Transverse colon (tissue), 4 donors: ENCODE measurements at regions of chr20 and their contacts with region 1.

Region 1: GRCh38 chr20:40617594-40617993 is 71.4 kb downstream of the MAFB start:
- DNase-seq: no peak
- H3K4me3 ChIP-seq: no peak overlapping the region
- H3K27ac ChIP-seq: no peak overlapping the region
- H3K4me1 ChIP-seq: no peaks in the 10 kb centered on the region
- H3K27me3 ChIP-seq: peaks cover 18% of the 10 kb centered on the region
- CTCF ChIP-seq: no peak
- EP300 ChIP-seq: no peak
- POLR2A ChIP-seq: no peak

Region 2: DNA sequence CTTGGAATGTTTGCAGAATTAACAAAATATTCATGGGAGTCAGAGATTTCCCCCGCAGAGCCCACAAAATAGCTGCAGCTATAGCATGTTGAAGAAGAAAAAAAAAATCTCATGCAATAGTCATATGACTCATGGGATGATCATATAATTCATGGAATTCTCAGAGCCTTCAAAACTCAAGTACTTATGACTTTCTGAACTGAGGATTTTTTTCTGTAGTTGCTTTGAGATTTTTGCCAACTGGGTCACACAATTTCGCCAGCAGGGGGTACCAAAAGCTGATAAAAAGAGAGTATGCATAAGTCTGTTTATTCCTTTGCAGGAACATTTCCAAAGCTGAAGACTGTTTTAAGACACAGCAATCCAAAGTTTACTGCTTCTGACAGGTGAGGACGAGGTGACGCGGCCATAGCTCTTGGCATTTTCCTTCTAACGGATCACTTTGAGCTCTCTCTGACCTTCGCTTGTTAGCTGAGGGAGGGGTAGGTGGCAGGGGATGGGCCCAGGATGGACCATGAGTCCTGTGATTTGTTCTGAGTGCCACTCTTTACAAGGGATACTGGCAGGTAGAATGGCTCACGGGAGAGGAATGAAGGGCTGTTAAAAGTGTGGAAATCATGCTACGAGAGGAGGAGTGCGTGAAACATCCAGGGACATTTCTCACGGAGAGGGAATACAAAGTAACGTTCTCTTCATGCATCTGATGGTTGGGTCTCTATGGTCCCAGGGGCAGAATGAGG is 1586.8 kb after region 1 on chr20:
- in situ Hi-C with region 1: no loop called
- intact Hi-C with region 1: loop called (anchors 10 kb)
- DNase-seq: no peak
- H3K4me3 ChIP-seq: no peak overlapping the region
- H3K27ac ChIP-seq: no peak overlapping the region
- H3K4me1 ChIP-seq: no peaks in the 10 kb centered on the region
- H3K27me3 ChIP-seq: no peaks in the 10 kb centered on the region
- CTCF ChIP-seq: peak in 1 of 5 experiments; percentile 20
- EP300 ChIP-seq: no peak
- POLR2A ChIP-seq: no peak